ENCODE measurements at regions of chr1 and their contacts with region 1.

Region 1: DNA sequence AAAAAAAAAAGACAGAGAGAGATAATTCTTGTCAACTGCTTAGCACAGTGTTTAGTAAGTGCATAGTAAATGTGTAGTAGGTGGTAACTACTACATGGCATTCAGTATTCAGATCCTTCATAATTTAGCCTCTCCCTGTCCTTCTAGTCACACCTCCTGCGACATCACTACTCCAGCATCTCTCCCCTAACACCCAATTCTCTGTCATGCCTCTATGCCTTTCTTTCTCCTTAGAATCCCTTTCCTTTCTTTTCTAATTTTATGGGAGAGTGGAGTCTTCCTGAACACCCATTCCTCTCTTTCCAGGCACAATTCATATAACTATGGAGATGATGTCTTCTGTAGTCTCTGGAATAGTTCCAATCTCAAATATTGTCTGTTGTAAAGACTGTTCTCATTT is 3.9 kb upstream of the VPS72 start:
- DNase-seq: no peak
- ATAC-seq: no peak

Region 2: DNA sequence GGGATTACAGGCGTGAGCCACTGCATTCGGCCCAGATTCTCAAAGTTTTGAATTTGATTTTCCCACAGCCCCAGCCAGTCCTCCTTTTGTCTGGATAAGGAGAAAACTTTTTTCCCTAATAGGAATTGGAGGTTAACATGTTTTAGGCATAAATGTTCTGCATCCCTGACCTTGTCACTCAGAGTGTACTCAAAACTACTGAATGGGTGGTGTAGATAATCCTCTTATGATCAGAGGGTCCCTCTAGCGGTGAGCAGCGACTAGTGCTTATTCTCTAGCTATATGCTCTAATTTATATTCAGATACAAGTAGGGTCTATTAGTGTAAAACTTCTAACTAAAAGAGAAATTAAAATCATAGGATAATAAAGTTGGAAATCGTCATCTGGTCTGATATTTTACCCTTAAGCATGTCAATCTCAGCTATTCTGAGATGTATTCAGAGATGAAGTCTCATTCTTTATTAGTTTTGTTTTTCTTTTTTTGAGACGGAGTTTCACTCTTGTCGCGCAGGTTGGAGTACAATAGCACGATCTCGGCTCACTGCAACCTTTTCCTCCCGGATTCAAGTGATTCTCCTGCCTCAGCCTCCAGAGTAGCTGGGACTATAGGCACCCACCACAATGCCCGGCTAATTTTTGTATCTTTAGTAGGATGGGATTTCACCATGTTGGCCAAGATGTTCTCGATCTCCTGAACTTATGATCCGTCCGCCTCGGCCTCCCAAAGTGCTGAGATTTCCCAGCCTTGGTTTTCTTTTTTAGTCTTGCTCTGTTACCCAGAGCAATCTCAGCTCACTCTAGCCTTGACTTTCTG is 58.0 kb after region 1 on chr1:
- intact Hi-C with region 1: loop called (anchors 2 kb)
- DNase-seq: peak; percentile 75
- ATAC-seq: peak; percentile 50

Region 3: GRCh38 chr1:151340870-151341754 is 147.3 kb after region 1 on chr1:
- intact Hi-C with region 1: no loop called
- DNase-seq: no peak
- ATAC-seq: peak; percentile 91

Region 4: DNA sequence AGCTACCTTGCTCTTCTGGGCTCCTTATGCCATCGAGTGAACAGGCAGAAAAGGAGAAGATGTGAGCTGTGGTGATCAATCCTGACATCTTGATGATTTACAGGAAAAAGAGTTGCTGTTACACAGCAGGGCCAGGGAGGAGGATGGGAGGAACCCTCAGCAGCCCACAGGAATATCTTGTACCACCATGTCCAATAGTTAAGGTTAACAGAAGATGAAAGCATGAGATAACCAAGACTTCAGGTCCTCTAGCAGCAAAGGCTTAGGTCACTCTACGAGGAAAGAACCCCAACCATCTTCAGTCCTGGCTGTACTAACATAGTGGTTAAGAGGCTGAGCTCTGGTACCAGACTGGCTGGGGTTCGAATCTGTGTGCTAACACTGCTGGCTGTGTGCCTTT is 190.7 kb after region 1 on chr1:
- intact Hi-C with region 1: no loop called
- DNase-seq: no peak
- ATAC-seq: no peak

Region 5: DNA sequence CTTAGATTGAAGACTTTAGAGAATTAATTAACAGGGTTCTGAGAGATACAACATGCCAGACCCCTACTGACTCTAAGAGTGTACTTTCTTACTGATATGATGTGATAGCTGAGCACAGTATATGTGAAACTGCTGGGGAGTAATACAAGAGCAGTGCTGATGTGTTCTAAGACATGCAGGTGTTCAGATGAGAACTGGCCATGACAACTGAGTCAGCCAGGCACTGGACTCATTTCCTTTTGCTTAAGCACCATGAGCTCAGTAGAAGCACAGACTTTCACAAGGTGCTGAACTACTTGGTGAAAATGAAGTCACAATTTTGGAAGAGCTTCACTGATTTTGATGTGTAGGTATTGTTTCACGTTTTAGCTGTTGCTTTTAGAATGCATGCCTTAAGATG is 281.3 kb after region 1 on chr1:
- intact Hi-C with region 1: no loop called
- DNase-seq: no peak
- ATAC-seq: no peak